HCT116 (cell line): ENCODE measurements at regions of chr10 and their contacts with region 1.

Region 1: GRCh38 chr10:102503281-102504220 is at the start of gene SUFU:
- DNase-seq: peak; percentile 100
- ATAC-seq: peak; percentile 72
- H3K4me3 ChIP-seq: peak within 1 kb of the TSS; percentile 83 to 89
- H3K27ac ChIP-seq: peak within 1 kb of the TSS; percentile 59
- H3K4me1 ChIP-seq: peaks cover 13 to 27% of the 10 kb centered on the region in 2 experiments
- H3K27me3 ChIP-seq: no peaks in the 10 kb centered on the region
- CTCF ChIP-seq: peak in 2 of 3 experiments; percentile 94 to 99; a peak in 4 of 6 replicates
- POLR2A ChIP-seq: peak; percentile 53
- RAD21 ChIP-seq: no peak
- total RNA-seq, gene SUFU: 18.8 TPM

Region 2: GRCh38 chr10:102596506-102596971 is 93.0 kb after region 1 on chr10:
- CTCF ChIA-PET with region 1: interaction called, 3 read pairs
- POLR2A ChIA-PET with region 1: no interaction called
- RAD21 ChIA-PET with region 1: no interaction called
- intact Hi-C with region 1: loop called (anchors 5 kb)
- DNase-seq: peak; percentile 57
- ATAC-seq: peak; percentile 94
- H3K4me3 ChIP-seq: no peak overlapping the region
- H3K27ac ChIP-seq: peak overlapping the region; percentile 4; the same call in 1 of the 2 replicates
- H3K4me1 ChIP-seq: peaks cover 7 to 25% of the 10 kb centered on the region in 2 experiments; a peak in 3 of 4 replicates
- H3K27me3 ChIP-seq: no peaks in the 10 kb centered on the region
- CTCF ChIP-seq: peak in 2 of 3 experiments; percentile 98 to 100; a peak in 4 of 6 replicates
- POLR2A ChIP-seq: no peak
- RAD21 ChIP-seq: no peak